ENCODE measurements at regions of chr20 and their contacts with region 1.

Region 1: DNA sequence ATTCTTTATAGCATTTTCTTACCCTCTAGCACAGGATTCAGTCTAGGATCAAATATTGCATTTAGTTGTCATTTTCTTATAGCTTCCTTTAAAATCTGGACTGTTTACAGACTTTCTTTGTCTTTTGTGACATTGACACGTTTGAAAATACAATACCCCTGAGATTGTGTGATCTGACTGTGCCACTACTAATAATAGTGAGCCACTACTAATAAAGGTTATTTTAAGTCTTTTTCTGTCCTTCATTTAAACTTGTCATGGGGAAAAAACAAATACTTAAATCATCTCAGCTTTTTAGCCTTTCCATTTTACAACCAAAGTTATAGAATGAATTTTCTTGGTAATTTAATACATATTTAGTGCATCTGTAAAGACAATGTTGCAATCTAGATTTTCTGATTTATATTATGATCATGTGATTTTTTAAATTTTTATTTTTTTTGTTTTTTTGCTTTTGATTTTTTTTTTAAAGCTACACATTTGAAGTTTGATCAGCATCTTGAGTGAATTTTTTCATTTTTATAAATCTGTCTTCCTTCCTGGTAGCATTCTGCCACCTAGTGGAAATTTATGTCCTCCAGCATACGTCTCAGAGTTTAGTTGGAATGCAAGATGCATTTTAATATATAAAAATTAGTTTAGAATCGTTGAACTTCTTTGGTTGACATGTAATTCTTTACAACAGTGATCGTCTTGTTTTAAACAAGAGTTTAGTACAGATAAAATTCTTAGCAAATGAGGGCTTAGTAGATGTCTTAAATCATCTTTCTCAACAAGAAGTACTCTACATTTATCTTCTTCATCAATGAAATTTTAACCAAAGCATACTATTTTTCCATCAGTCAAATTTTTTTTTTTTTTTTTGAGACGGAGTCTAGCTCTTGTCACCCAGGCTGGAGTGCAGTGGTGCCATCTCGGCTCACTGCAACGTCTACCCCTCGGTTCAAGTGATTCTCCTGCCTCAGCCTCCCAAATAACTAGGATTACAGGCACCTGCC is 119.4 kb downstream of the NCOA3 start:
- DNase-seq: peak; percentile 37
- H3K4me3 ChIP-seq: no peak overlapping the region
- H3K27ac ChIP-seq: no peak overlapping the region
- H3K27me3 ChIP-seq: no peaks in the 10 kb centered on the region
- CTCF ChIP-seq: peak; percentile 85

Region 2: GRCh38 chr20:47392015-47392720 is 228.9 kb before region 1 on chr20:
- CTCF ChIA-PET with region 1: interaction called, 17 read pairs
- POLR2A ChIA-PET with region 1: no interaction called
- DNase-seq: peak; percentile 82
- H3K4me3 ChIP-seq: no peak overlapping the region
- H3K27ac ChIP-seq: peak overlapping the region; percentile 97
- H3K27me3 ChIP-seq: no peaks in the 10 kb centered on the region
- CTCF ChIP-seq: no peak

Region 3: GRCh38 chr20:47493175-47493962 is 127.7 kb before region 1 on chr20:
- CTCF ChIA-PET with region 1: interaction called, 11 read pairs
- POLR2A ChIA-PET with region 1: no interaction called
- DNase-seq: no peak
- H3K4me3 ChIP-seq: no peak overlapping the region
- H3K27ac ChIP-seq: no peak overlapping the region
- H3K27me3 ChIP-seq: no peaks in the 10 kb centered on the region
- CTCF ChIP-seq: no peak

Region 4: DNA sequence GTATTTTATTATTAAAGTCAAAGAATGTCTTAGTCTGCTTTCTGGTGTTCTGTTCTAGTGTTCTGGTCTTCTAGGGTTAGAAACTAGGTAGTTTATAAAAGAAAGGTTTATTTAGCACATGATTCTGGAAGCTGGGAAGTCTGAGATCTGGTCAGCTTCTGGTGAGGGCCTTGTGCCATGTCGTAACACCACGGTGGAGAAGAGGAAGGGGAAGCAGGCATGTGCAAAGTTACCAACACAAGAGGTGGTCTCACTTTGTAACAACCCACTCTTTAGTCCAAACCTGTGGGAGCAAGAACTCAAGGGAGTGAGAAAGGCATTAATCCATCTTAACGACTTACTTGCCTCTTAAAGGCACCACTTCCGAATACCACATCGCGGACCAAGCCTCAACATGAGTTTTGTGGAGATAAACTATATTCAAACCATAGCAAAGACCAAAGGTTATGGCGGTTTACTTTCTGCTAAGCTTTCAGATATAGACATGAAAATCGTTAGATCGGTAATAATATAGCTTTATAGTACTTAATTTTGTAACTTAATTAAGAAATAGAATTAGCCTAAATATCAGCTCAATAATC is 20.1 kb before region 1 on chr20:
- CTCF ChIA-PET with region 1: interaction called, 13 read pairs
- POLR2A ChIA-PET with region 1: no interaction called
- DNase-seq: no peak
- H3K4me3 ChIP-seq: no peak overlapping the region
- H3K27ac ChIP-seq: no peak overlapping the region
- H3K27me3 ChIP-seq: no peaks in the 10 kb centered on the region
- CTCF ChIP-seq: no peak

Region 5: GRCh38 chr20:47610247-47610944 is 10.7 kb before region 1 on chr20:
- CTCF ChIA-PET with region 1: interaction called, 14 read pairs
- POLR2A ChIA-PET with region 1: no interaction called
- DNase-seq: peak; percentile 34
- H3K4me3 ChIP-seq: no peak overlapping the region
- H3K27ac ChIP-seq: peak overlapping the region; percentile 66
- H3K27me3 ChIP-seq: no peaks in the 10 kb centered on the region
- CTCF ChIP-seq: no peak

Region 6: GRCh38 chr20:47735412-47736400 is 114.6 kb after region 1 on chr20:
- CTCF ChIA-PET with region 1: no interaction called
- POLR2A ChIA-PET with region 1: no interaction called
- DNase-seq: no peak
- H3K4me3 ChIP-seq: no peak overlapping the region
- H3K27ac ChIP-seq: no peak overlapping the region
- H3K27me3 ChIP-seq: peaks cover 2% of the 10 kb centered on the region
- CTCF ChIP-seq: no peak